Spleen (tissue), 13 donors: ENCODE measurements at regions of chr9 and their contacts with region 1.

Region 1: GRCh38 chr9:125143375-125144090 is at the start of gene SCAI:
- DNase-seq: peak; percentile 99
- H3K4me3 ChIP-seq: peak within 1 kb of the TSS; percentile 56 to 91 (median 80)
- H3K27ac ChIP-seq: peak within 1 kb of the TSS in 7 of 8 donors; percentile 42 to 86 (median 77)
- H3K4me1 ChIP-seq: peaks cover 11 to 40% (median 17%) of the 10 kb centered on the region in 6 donors
- H3K27me3 ChIP-seq: no peaks in the 10 kb centered on the region
- CTCF ChIP-seq: peak; percentile 98 to 100 (median 99)
- POLR2A ChIP-seq: peak in 1 of 3 donors; percentile 66
- total RNA-seq, gene SCAI: 5.4 to 19.6 (median 8.3) TPM

Region 2: DNA sequence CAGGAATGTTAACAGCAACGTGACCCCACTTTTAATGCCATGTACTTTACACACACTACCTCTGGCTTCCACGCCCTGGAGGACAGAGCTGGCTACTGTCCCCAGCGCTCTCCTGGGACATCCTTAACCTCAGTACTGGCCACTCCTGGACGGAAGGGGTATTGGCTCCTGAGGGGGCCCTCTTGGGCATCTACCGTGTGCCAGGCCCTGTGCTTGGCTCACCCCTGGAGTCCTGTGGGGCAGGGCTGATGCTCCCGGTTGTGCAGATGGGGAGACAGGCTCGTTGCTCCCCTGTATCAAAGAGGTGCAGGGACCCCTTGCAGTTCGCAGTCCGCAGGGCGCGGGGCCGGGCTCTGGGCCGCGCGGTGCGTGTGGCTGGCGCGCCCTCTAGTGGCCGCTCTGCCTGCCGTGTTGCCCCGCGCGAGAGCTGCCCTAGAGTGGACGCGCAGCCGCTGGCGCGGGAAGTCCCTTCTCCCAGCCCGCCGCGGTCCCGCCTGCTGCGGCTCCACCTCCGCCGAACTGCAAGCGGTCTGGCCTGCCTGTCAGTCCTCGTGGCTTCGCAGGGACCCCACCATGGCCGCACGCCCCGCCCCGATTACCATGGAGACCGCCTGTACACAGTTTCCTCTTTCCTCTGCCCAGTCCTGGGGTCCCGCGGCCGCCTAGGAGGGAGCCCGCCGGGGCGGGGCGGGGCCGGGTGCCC is 290.6 kb before region 1 on chr9 and contains the start of gene WDR38:
- intact Hi-C with region 1: loop called (anchors 10 kb)
- DNase-seq: peak; percentile 95
- H3K4me3 ChIP-seq: peak within 1 kb of the TSS; percentile 20 to 70 (median 42)
- H3K27ac ChIP-seq: peak within 1 kb of the TSS in 6 of 8 donors; percentile 41 to 68 (median 50)
- H3K4me1 ChIP-seq: peaks cover 11 to 30% (median 16%) of the 10 kb centered on the region in 6 donors
- H3K27me3 ChIP-seq: no peaks in the 10 kb centered on the region
- CTCF ChIP-seq: peak; percentile 89 to 100 (median 98)
- POLR2A ChIP-seq: no peak
- total RNA-seq, gene WDR38: not detected

Region 3: DNA sequence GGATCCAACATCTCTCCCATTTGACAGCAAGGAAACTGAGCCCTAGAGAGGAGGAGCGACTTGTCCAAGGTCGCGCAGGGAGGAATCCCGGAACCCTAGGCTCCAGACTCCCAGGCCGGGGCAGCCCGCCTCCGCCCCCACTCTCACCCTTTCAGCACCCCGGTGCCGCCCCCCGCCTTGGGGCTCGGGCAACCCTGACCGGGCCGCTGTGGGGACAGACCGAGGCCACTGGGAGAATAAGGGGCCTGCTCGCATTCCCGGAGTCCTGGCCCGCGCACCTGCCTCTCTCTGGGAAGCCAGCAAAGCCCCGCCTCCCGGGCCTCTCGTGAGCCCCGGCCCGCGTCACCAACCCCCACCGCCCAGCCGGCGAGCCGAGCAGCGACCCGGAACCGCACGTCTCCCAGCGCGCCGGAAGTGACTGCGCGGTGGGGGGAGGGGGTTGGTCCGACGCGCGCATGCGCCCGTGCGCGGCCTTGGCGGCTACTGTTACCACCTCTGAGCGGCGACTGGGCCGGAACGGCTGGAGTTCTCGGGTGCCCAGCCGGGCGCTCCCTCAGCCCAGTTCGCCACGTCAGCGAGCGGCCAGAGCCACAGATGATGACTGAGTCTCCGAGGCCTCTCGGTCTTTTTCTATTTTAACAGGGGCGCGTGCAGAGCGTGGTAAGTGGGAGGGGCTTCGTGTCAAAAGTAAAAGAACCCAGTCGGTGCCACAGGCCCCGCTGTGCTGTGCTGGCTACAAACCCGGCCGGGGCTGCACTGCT is 202.7 kb before region 1 on chr9 and contains the start of gene GOLGA1:
- intact Hi-C with region 1: loop called (anchors 10 kb)
- DNase-seq: peak; percentile 99
- H3K4me3 ChIP-seq: peak within 1 kb of the TSS; percentile 53 to 92 (median 82)
- H3K27ac ChIP-seq: peak within 1 kb of the TSS; percentile 92 to 99 (median 98)
- H3K4me1 ChIP-seq: peaks cover 7 to 51% (median 22%) of the 10 kb centered on the region in 6 donors
- H3K27me3 ChIP-seq: no peaks in the 10 kb centered on the region
- CTCF ChIP-seq: peak in 3 of 11 experiments; percentile 13 to 23 (median 20)
- POLR2A ChIP-seq: peak in 2 of 3 donors; percentile 85
- total RNA-seq, gene GOLGA1: 21.0 to 30.5 (median 24.3) TPM

Region 4: DNA sequence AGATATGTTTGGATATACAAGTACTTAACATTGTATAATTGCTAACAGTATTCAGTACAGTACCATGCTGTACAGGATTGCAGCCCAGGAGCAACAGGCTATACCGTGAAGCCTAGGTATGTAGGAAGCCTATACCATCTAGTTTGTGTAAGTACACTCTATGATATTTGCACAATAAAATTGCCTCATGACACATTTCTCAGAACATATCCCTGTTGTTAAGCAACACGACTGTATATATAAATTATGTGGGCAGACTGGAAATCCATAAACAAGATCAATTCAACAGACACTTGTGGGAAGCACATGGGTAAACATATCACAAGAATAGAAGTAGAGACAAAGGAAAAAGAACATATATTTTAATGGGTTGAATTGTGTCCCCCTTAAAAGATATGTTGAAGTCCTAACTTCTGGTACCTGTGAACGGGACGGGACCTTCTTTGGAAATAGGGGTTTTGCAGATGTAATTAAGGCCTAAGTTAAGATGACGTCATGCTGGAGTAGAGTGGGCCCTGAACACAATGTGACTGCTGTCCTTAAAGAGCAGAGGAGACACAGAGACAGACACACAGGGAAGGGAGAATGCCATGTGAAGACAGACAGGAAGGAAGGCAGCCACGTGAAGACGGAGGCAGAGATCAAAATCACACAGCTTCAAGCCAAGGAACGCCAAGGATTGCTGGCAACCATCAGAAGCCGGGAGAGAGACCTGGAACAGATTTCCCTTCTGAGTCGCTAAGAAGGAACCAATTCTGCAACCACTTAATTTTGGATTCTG is 76.5 kb before region 1 on chr9:
- intact Hi-C with region 1: no loop called
- DNase-seq: no peak
- H3K4me3 ChIP-seq: no peak overlapping the region
- H3K27ac ChIP-seq: no peak overlapping the region
- H3K4me1 ChIP-seq: no peaks in the 10 kb centered on the region
- H3K27me3 ChIP-seq: no peaks in the 10 kb centered on the region
- CTCF ChIP-seq: no peak
- POLR2A ChIP-seq: no peak

Region 5: GRCh38 chr9:125361837-125362531 is 218.5 kb after region 1 on chr9:
- intact Hi-C with region 1: no loop called
- DNase-seq: no peak
- H3K4me3 ChIP-seq: no peak overlapping the region
- H3K27ac ChIP-seq: peak overlapping the region in 1 of 8 donors; percentile 31
- H3K4me1 ChIP-seq: peaks cover 0 to 4% (median 0%) of the 10 kb centered on the region in 6 donors
- H3K27me3 ChIP-seq: no peaks in the 10 kb centered on the region
- CTCF ChIP-seq: no peak
- POLR2A ChIP-seq: no peak